Caco-2 (cell line): ENCODE measurements at regions of chr13 and their contacts with region 1.

Region 1: GRCh38 chr13:96065849-96066248 is 12.6 kb upstream of the UGGT2 start:
- DNase-seq: no peak
- H3K4me3 ChIP-seq: no peak overlapping the region
- H3K4me3 Mint-ChIP-seq: no peak overlapping the region
- H3K27ac Mint-ChIP-seq: no peak overlapping the region
- H3K4me1 ChIP-seq: no peaks in the 10 kb centered on the region
- H3K4me1 Mint-ChIP-seq: no peaks in the 10 kb centered on the region
- H3K27me3 ChIP-seq: no peaks in the 10 kb centered on the region; the same call in 1 of the 2 replicates
- H3K27me3 Mint-ChIP-seq: peaks cover 23% of the 10 kb centered on the region
- CTCF ChIP-seq: no peak

Region 2: GRCh38 chr13:96229356-96229755 is 163.5 kb after region 1 on chr13:
- CTCF ChIA-PET with region 1: interaction called, 3 read pairs
- POLR2A ChIA-PET with region 1: no interaction called
- intact Hi-C with region 1: loop called (anchors 5 kb)
- DNase-seq: peak in 1 of 2 experiments; percentile 44
- H3K4me3 ChIP-seq: no peak overlapping the region
- H3K4me3 Mint-ChIP-seq: no peak overlapping the region
- H3K27ac Mint-ChIP-seq: no peak overlapping the region
- H3K4me1 ChIP-seq: no peaks in the 10 kb centered on the region
- H3K4me1 Mint-ChIP-seq: no peaks in the 10 kb centered on the region
- H3K27me3 ChIP-seq: peaks cover 2% of the 10 kb centered on the region; the same call in 1 of the 2 replicates
- H3K27me3 Mint-ChIP-seq: no peaks in the 10 kb centered on the region
- CTCF ChIP-seq: peak; percentile 45 to 70

Region 3: GRCh38 chr13:96294930-96295881 is 229.4 kb after region 1 on chr13:
- CTCF ChIA-PET with region 1: no interaction called
- POLR2A ChIA-PET with region 1: no interaction called
- intact Hi-C with region 1: no loop called
- DNase-seq: no peak
- H3K4me3 ChIP-seq: no peak overlapping the region
- H3K4me3 Mint-ChIP-seq: no peak overlapping the region
- H3K27ac Mint-ChIP-seq: no peak overlapping the region
- H3K4me1 ChIP-seq: no peaks in the 10 kb centered on the region
- H3K4me1 Mint-ChIP-seq: no peaks in the 10 kb centered on the region
- H3K27me3 ChIP-seq: no peaks in the 10 kb centered on the region
- H3K27me3 Mint-ChIP-seq: peaks cover 20% of the 10 kb centered on the region
- CTCF ChIP-seq: no peak